ENCODE measurements at regions of chr14 and their contacts with region 1.

Region 1: DNA sequence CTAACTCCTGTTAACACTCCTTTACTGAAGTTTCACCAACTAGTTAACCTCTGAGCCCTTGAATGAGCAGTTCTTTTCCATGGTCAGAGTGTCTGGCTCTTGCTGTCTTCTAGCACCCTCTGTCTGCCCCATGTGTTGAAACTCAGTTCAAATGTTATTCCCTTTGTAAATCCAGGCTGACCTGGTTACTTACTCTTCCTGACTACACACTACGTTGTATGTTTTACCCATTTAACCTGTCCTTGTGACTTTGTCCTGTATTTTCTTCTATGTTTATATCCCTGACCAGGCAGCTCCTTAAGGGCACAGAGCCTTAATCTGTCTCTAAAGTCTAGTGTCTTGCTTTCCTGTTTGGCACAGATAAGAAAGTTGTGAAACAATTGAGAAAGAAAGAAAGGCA is 389.0 kb upstream of the RPL10L start:
- DNase-seq: no peak
- H3K4me3 ChIP-seq: no peak overlapping the region
- H3K27ac ChIP-seq: no peak overlapping the region
- H3K27me3 ChIP-seq: no peaks in the 10 kb centered on the region
- CTCF ChIP-seq: peak in 39 of 56 donors; percentile 13 to 65 (median 37)

Region 2: DNA sequence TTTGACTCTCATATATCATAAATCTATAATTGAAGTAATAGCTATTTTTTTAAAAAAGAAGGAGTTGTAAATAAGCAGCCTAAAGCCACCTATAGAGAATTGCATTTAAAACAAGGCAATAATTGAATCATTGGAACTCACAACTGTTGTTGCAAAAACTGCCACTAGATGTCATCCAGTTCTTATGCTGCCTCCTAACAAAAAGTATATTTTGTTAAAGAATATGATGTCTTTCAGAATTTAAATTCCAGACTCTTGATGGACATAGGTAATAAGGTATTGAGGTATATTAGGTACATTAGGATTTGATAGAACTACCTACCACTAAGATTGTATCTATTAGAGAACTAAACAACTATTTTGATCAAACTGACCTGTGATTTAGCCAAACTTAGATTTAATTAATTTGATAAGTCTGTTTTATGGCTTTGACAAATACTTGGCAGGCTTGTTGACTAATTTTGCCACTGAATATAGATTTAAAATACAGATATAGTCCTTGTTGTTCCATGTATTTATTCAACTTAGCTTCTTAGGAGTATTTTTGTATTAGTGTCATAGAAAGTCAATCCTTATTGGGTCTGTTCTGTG is 790.3 kb before region 1 on chr14:
- intact Hi-C with region 1: loop called in 1 of 2 experiments (anchors 10 kb)
- DNase-seq: no peak
- H3K4me3 ChIP-seq: no peak overlapping the region
- H3K27ac ChIP-seq: no peak overlapping the region
- H3K27me3 ChIP-seq: no peaks in the 10 kb centered on the region
- CTCF ChIP-seq: peak in 55 of 56 donors; percentile 39 to 81 (median 66)

Region 3: GRCh38 chr14:46985529-46986380 is 54.8 kb before region 1 on chr14:
- intact Hi-C with region 1: no loop called
- DNase-seq: no peak
- H3K4me3 ChIP-seq: no peak overlapping the region
- H3K27ac ChIP-seq: no peak overlapping the region
- H3K27me3 ChIP-seq: no peaks in the 10 kb centered on the region
- CTCF ChIP-seq: no peak

Region 4: DNA sequence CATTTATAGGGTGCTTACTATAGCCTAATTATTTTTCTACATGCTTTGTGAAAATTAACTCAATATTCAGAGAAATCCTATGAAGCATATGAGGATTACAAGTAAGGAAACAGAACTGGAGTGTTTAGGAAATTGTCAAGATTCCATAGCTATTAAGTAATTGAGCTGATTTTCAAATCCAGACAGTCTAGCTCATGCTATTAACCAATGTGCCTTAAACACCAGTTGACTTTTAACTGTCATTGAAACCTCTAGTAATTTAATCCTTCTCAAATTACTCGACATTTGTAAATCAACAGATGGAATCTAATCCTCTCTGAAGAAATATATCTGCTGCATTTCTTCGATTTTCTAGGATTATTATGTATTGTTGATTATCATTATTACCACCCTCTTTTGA is 145.9 kb after region 1 on chr14:
- intact Hi-C with region 1: no loop called
- DNase-seq: no peak
- H3K4me3 ChIP-seq: no peak overlapping the region
- H3K27ac ChIP-seq: no peak overlapping the region
- H3K27me3 ChIP-seq: no peaks in the 10 kb centered on the region
- CTCF ChIP-seq: no peak